GM12878 (cell line): ENCODE measurements at regions of chr3 and their contacts with region 1.

Region 1: GRCh38 chr3:4722103-4722502 is 229.0 kb downstream of the ITPR1 start:
- DNase-seq: no peak
- ATAC-seq: peak; percentile 87
- H3K4me3 ChIP-seq: no peak overlapping the region
- H3K27ac ChIP-seq: no peak overlapping the region
- H3K4me1 ChIP-seq: no peaks in the 10 kb centered on the region
- H3K27me3 ChIP-seq: no peaks in the 10 kb centered on the region
- CTCF ChIP-seq: peak; percentile 30 to 56 (median 47); a peak in 5 of 6 replicates
- EP300 ChIP-seq: no peak
- POLR2A ChIP-seq: no peak
- RAD21 ChIP-seq: peak; percentile 85

Region 2: DNA sequence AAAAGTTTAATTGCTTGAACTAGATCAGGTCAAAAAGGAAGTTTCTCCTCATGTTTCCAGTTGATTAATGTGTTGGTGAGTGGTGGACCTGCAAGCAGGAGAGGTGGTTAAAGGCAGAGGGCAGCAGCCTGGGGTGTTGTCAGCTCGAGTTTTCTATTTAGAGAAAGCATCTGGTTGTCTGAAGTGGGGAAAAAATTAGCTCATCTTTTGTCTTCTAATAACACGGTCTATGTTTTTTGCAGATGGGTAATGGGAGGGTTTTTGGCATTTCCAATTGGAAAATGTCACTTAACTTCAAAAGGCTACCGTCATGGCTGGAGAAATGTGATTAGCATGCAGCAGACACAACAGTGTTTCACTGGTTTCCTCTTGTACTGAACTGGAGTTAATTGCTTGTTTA is 106.4 kb before region 1 on chr3:
- CTCF ChIA-PET with region 1: no interaction called
- POLR2A ChIA-PET with region 1: no interaction called
- RAD21 ChIA-PET with region 1: no interaction called
- SMC1A ChIA-PET with region 1: no interaction called
- in situ Hi-C with region 1: no loop called
- intact Hi-C with region 1: no loop called
- DNase-seq: no peak
- ATAC-seq: no peak
- H3K4me3 ChIP-seq: no peak overlapping the region
- H3K27ac ChIP-seq: no peak overlapping the region
- H3K4me1 ChIP-seq: no peaks in the 10 kb centered on the region
- H3K27me3 ChIP-seq: no peaks in the 10 kb centered on the region
- CTCF ChIP-seq: no peak
- EP300 ChIP-seq: no peak
- POLR2A ChIP-seq: no peak
- RAD21 ChIP-seq: no peak

Region 3: DNA sequence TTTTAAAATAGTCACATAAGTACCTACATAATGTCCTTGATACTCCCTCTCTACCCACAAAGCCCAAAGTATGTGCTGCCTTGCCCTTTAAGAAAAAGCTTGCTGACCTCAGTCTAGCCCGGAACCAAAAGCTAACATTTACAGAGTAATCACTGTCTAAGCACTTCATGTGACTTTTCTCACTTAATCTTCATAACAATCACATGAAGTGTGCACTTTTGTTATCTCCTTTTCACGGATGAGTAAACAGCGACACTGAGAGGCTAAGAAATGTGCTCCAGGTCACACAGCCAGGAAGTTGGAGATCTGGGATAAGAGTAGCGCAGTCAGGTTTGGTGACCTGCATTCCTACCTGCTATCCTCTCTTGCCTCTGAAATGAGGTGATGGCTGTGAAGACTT is 34.9 kb before region 1 on chr3:
- CTCF ChIA-PET with region 1: no interaction called
- POLR2A ChIA-PET with region 1: no interaction called
- RAD21 ChIA-PET with region 1: no interaction called
- SMC1A ChIA-PET with region 1: no interaction called
- in situ Hi-C with region 1: no loop called
- intact Hi-C with region 1: no loop called
- DNase-seq: no peak
- ATAC-seq: no peak
- H3K4me3 ChIP-seq: no peak overlapping the region
- H3K27ac ChIP-seq: no peak overlapping the region
- H3K4me1 ChIP-seq: no peaks in the 10 kb centered on the region
- H3K27me3 ChIP-seq: no peaks in the 10 kb centered on the region
- CTCF ChIP-seq: no peak
- EP300 ChIP-seq: no peak
- POLR2A ChIP-seq: no peak
- RAD21 ChIP-seq: no peak

Region 4: DNA sequence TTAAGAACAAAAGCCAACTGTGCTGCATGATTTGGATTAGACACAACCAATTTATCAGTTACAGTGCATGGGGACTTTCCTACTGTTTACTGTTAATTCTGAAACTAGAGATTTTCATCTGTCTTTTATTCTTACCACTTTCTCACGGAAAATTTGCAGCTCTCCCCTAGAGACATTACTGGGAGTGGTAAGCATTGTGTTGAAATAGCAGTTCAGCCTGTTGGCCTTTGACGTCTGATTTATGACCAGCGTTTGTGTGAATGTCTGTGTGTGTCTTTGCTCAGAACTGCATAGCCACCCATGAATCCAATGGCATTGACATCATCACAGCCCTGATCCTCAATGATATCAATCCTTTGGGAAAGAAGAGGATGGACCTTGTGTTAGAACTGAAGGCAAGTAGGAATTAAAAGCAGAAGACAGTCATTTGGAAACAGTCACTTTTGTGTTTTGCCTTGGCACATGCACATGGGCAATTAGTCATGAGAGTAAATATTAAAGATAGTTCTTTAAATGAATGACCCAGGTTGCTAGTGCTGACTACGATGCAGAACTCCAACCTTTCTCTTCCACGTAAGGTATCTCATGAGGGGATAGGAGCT is 55.0 kb after region 1 on chr3:
- CTCF ChIA-PET with region 1: interaction called, 34 read pairs
- POLR2A ChIA-PET with region 1: interaction called, 3 read pairs
- RAD21 ChIA-PET with region 1: interaction called, 24 read pairs
- SMC1A ChIA-PET with region 1: interaction called, 39 read pairs
- in situ Hi-C with region 1: no loop called
- intact Hi-C with region 1: loop called (anchors 2 kb)
- DNase-seq: peak; percentile 98
- ATAC-seq: peak; percentile 82
- H3K4me3 ChIP-seq: no peak overlapping the region
- H3K27ac ChIP-seq: peak overlapping the region; percentile 99
- H3K4me1 ChIP-seq: peaks cover 32% of the 10 kb centered on the region
- H3K27me3 ChIP-seq: no peaks in the 10 kb centered on the region
- CTCF ChIP-seq: no peak
- EP300 ChIP-seq: peak; percentile 90 to 97; a peak in 3 of 4 replicates
- POLR2A ChIP-seq: peak; percentile 53; the same call in 1 of the 2 replicates
- RAD21 ChIP-seq: peak; percentile 41

Region 5: DNA sequence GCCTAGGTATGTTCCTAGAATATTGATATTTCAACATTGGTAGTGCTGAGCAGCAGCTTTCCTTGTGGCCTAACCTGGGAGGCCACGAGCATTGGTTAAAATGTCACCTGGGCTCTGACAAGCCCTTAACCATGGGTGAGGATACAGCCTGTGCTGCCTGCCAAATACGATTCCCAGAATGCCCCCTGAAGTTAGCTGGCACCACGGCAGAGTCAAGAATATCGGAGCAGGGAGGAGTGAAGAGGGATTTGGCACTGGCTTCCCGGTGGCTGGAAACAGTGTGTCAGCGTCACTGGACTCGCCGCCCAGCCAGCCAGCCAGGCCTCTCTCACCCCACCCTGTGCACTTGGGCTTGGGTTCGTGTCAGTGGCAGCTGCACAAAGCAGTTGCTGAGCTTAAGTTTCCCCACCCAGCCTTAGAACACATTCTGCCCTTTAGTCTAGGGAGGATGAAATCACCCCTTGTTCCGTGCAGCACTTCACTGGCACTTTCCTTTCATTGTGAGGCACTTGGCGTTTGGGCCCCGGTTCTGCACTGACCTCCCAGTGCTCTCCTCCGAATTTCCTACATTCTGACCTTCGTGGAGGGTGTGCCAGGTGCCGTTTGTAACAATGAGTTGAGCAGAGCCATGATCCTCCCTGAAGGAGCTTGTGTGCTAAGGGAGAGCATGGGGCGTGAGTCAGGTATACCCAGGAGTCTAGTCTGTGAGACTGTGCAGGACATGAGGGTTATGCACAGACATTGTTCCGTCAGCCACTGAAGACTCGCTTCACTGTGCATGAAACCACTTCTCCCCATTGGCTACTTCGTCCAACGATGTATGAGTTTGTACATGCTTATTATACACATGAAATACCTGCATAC is 104.4 kb after region 1 on chr3:
- CTCF ChIA-PET with region 1: interaction called, 5 read pairs
- POLR2A ChIA-PET with region 1: no interaction called
- RAD21 ChIA-PET with region 1: interaction called, 6 read pairs
- SMC1A ChIA-PET with region 1: interaction called, 8 read pairs
- in situ Hi-C with region 1: no loop called
- intact Hi-C with region 1: loop called (anchors 5 kb)
- DNase-seq: no peak
- ATAC-seq: peak; percentile 9
- H3K4me3 ChIP-seq: no peak overlapping the region
- H3K27ac ChIP-seq: no peak overlapping the region
- H3K4me1 ChIP-seq: peaks cover 21% of the 10 kb centered on the region
- H3K27me3 ChIP-seq: no peaks in the 10 kb centered on the region
- CTCF ChIP-seq: no peak
- EP300 ChIP-seq: no peak
- POLR2A ChIP-seq: peak; percentile 31; the same call in 1 of the 2 replicates
- RAD21 ChIP-seq: no peak

Region 6: GRCh38 chr3:4972652-4973643 is 250.8 kb after region 1 on chr3:
- CTCF ChIA-PET with region 1: interaction called, 81 read pairs
- POLR2A ChIA-PET with region 1: interaction called, 4 read pairs
- RAD21 ChIA-PET with region 1: interaction called, 77 read pairs
- SMC1A ChIA-PET with region 1: interaction called, 55 read pairs
- in situ Hi-C with region 1: no loop called
- intact Hi-C with region 1: no loop called
- DNase-seq: peak; percentile 68
- ATAC-seq: peak; percentile 23
- H3K4me3 ChIP-seq: peak overlapping the region; percentile 37; the same call in 1 of the 2 replicates
- H3K27ac ChIP-seq: peak overlapping the region; percentile 45
- H3K4me1 ChIP-seq: peaks cover 29% of the 10 kb centered on the region
- H3K27me3 ChIP-seq: no peaks in the 10 kb centered on the region
- CTCF ChIP-seq: no peak
- EP300 ChIP-seq: peak; percentile 60 to 86; a peak in 3 of 4 replicates
- POLR2A ChIP-seq: no peak
- RAD21 ChIP-seq: no peak

Region 7: DNA sequence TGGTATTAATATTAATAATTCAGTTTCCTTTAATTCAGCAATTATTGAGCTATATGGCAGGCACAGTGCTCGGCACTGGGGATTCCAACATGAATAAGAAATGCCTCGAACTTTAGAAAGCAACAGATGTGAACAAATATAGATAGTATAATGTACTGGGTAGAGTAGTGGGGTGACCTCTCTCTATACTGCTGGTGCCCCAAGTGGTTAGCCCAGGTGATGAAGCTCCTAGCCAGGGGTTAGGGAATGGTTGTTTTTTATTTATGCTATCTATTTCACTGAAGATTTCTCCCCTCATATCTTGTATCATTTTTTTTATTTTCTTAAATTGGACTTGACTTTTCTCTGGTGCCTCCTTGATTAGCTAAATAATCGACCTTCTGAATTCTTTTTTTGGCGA is 319.2 kb after region 1 on chr3:
- CTCF ChIA-PET with region 1: interaction called, 11 read pairs
- POLR2A ChIA-PET with region 1: no interaction called
- RAD21 ChIA-PET with region 1: no interaction called
- SMC1A ChIA-PET with region 1: no interaction called
- in situ Hi-C with region 1: no loop called
- intact Hi-C with region 1: no loop called
- DNase-seq: no peak
- ATAC-seq: peak; percentile 49
- H3K4me3 ChIP-seq: no peak overlapping the region
- H3K27ac ChIP-seq: no peak overlapping the region
- H3K4me1 ChIP-seq: peaks cover 9% of the 10 kb centered on the region
- H3K27me3 ChIP-seq: no peaks in the 10 kb centered on the region
- CTCF ChIP-seq: 0 out of 6 replicates have a peak, but pooled peaks of 1 of the 3 experiments have one; percentile 18
- EP300 ChIP-seq: no peak
- POLR2A ChIP-seq: no peak
- RAD21 ChIP-seq: no peak